ENCODE measurements at regions of chr11 and their contacts with region 1.

Region 1: DNA sequence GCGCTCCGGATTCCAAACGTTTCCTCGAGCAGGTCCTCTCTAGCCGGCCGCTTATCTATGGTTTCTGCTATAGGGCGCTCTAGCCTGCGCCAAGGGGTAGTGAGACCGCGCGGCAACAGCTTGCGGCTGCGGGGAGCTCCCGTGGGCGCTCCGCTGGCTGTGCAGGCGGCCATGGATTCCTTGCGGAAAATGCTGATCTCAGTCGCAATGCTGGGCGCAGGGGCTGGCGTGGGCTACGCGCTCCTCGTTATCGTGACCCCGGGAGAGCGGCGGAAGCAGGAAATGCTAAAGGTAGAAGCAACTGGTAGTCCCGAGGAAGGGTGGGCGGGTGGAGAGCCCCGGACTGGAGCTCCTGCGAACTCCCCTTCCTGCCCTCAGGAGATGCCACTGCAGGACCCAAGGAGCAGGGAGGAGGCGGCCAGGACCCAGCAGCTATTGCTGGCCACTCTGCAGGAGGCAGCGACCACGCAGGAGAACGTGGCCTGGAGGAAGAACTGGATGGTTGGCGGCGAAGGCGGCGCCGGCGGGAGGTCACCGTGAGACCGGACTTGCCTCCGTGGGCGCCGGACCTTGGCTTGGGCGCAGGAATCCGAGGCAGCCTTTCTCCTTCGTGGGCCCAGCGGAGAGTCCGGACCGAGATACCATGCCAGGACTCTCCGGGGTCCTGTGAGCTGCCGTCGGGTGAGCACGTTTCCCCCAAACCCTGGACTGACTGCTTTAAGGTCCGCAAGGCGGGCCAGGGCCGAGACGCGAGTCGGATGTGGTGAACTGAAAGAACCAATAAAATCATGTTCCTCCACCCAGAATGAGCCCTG is at the starts of genes LBHD1 and UQCC3:
- DNase-seq: peak; percentile 88
- H3K4me3 ChIP-seq: peak within 1 kb of the TSS; percentile 68 to 90
- H3K27ac ChIP-seq: peak within 1 kb of the TSS; percentile 80 to 94
- H3K4me1 ChIP-seq: peaks cover 21 to 22% of the 10 kb centered on the region in 2 experiments; a peak in 3 of 4 replicates
- H3K27me3 ChIP-seq: no peaks in the 10 kb centered on the region
- CTCF ChIP-seq: no peak
- EP300 ChIP-seq: no peak
- RAD21 ChIP-seq: no peak
- polyA plus RNA-seq, gene LBHD1: 9.7 and 12.0 TPM in 2 replicates
- polyA plus RNA-seq, gene UQCC3: 22.7 and 24.8 TPM in 2 replicates

Region 2: GRCh38 chr11:62645956-62646824 is 25.6 kb before region 1 on chr11 and contains the start of gene GANAB:
- CTCF ChIA-PET with region 1: no interaction called
- POLR2A ChIA-PET with region 1: interaction called, 10 read pairs
- DNase-seq: peak; percentile 99
- H3K4me3 ChIP-seq: peak within 1 kb of the TSS; percentile 78 to 87
- H3K27ac ChIP-seq: peak within 1 kb of the TSS; percentile 77 to 88
- H3K4me1 ChIP-seq: peaks cover 5 to 8% of the 10 kb centered on the region in 2 experiments; a peak in 2 of 4 replicates
- H3K27me3 ChIP-seq: no peaks in the 10 kb centered on the region
- CTCF ChIP-seq: no peak
- EP300 ChIP-seq: no peak; a peak in 1 of 4 replicates
- RAD21 ChIP-seq: no peak
- polyA plus RNA-seq, gene GANAB: 275 and 332 TPM in 2 replicates

Region 3: DNA sequence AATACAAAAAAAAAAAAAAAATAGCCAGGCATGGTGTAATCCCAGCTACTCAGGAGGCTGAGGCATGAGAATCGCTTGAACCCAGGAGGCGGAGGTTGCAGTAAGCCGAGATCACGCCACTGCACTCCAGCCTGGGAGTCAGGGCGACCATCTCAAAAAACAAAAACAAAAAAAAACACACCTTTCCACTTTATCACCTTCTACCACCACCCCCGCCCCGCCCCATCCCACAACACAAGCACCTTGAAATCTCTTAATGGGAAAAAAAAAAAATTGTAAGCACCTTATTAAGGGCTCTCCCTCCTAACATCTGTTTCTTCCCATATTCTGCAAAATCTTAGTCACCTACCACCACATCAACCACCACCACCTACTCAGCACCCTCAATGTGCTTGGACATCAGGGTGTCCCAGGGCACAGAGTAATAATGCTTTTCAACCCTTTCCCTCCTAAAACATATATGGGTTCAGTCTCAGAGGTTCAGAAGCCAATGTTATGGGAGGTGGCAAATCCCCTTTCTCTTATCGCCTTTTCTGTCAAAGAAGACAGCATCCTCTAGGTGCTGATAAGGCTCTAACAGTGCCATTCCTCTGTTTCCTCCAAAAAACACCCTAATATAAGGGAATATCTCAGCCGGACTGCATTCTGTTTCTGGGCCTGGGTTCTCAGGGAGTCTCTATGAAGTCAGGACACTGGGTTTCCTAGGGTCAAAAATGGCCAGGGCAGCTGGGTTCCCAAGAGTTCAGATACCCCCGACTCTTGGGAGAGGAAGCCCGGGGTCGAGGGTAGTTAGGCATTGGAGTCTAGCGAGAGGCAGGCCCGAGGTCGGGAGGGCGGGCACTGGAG is 19.4 kb before region 1 on chr11:
- CTCF ChIA-PET with region 1: interaction called, 3 read pairs
- POLR2A ChIA-PET with region 1: interaction called, 11 read pairs
- DNase-seq: no peak
- H3K4me3 ChIP-seq: peak overlapping the region; percentile 68 to 88
- H3K27ac ChIP-seq: peak overlapping the region; percentile 67 to 79; a peak in 3 of 4 replicates
- H3K4me1 ChIP-seq: peaks cover 2 to 5% of the 10 kb centered on the region in 2 experiments; a peak in 2 of 4 replicates
- H3K27me3 ChIP-seq: no peaks in the 10 kb centered on the region
- CTCF ChIP-seq: no peak
- EP300 ChIP-seq: no peak
- RAD21 ChIP-seq: no peak

Region 4: GRCh38 chr11:62705880-62706849 is 34.4 kb after region 1 on chr11:
- CTCF ChIA-PET with region 1: interaction called, 3 read pairs
- POLR2A ChIA-PET with region 1: interaction called, 11 read pairs
- DNase-seq: peak; percentile 97
- H3K4me3 ChIP-seq: peak overlapping the region; percentile 67 to 70
- H3K27ac ChIP-seq: peak overlapping the region; percentile 84 to 93
- H3K4me1 ChIP-seq: peaks cover 22 to 45% of the 10 kb centered on the region in 2 experiments; a peak in 3 of 4 replicates
- H3K27me3 ChIP-seq: no peaks in the 10 kb centered on the region
- CTCF ChIP-seq: no peak
- EP300 ChIP-seq: no peak
- RAD21 ChIP-seq: no peak

Region 5: DNA sequence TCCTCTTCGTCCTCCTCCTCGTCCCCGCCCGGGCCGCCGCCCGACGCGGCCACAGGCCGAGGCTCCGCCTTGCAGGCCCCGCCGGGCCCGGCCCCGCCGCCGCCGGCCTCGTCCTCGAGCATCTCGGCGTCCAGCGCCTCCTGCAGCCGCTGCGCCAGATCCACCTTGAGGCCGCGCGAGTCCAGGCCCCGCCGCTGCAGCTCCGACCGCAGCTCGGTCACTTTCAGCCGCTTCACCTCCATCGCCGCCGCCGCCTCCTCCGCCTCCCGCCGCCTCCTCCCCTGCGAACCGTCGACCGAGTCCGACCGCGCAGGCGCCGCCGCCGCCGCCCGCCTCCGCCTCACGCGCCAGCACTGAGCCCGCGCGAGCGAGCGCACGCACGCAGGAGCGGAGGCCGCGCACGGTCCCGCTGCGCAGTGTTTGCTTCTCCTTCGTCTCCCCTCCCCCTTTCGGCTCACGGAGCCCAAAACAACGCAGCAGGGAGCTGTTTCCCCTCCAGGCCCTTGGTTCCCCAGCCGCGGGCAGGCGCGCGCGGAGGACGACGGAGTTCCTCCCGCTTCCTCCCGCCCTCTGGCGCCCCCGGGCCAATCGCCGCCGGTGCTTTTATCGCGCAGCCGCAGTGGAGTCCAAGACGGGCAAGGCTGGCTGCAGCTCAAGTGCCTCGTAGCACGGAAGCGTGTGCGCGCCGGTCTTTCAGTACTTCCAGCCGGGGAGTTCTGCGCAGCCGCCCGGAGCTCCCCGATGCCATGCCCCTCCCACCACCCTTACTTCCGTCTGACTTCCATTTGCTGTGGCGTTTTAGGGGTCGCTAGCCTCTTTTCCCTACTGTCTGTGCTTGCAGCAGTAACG is 55.4 kb after region 1 on chr11 and contains the start of gene HNRNPUL2:
- CTCF ChIA-PET with region 1: interaction called, 3 read pairs
- POLR2A ChIA-PET with region 1: interaction called, 17 read pairs
- DNase-seq: peak; percentile 95
- H3K4me3 ChIP-seq: peak within 1 kb of the TSS; percentile 89 to 92
- H3K27ac ChIP-seq: peak within 1 kb of the TSS; percentile 99
- H3K4me1 ChIP-seq: peaks cover 12 to 21% of the 10 kb centered on the region in 2 experiments; a peak in 3 of 4 replicates
- H3K27me3 ChIP-seq: no peaks in the 10 kb centered on the region
- CTCF ChIP-seq: no peak; the same call in 1 of the 2 replicates
- EP300 ChIP-seq: no peak
- RAD21 ChIP-seq: no peak
- polyA plus RNA-seq, gene HNRNPUL2: 31.0 and 33.5 TPM in 2 replicates

Region 6: DNA sequence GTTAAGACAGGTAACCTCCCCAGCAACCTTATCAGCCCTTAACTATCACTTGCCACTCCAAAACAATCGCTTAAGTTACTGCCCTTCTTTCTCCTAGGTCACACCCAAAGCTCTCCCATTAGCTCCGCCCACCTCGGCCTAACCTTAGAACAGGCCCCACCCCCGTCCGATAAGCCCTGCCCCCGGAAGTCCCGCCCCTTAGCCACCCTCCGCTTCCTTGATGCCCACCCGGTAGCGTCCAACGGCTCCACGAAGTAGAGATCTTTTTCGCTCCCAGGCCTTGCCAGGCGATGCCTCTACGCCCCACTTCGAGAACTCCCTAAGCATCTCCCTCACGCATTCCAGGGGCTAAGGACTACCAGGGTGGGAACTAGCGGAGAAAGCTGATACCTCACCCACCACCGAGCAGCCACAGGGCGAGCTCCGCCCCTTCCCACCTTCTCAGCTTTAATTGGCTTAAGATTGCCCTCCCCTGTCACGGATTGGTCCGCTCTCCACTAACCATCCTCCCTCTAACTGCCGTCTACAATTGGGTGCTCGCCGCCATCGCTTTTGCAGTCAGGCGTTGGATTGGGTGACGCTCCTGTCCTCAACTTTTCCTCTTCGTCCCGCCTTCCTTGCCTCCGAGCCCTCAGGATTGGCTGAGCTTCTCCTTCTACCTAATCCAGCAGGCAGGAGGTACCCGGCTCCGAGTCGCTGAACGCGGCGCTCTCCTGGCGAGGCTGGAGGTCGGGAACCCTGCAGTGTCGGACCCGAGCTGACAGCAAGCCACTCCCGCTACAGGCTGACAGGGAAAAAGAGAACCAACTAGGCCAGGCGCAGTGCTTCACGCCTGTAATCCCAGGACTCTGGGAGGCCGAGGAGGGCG is 82.2 kb after region 1 on chr11 and contains the start of gene ZBTB3:
- CTCF ChIA-PET with region 1: no interaction called
- POLR2A ChIA-PET with region 1: interaction called, 10 read pairs
- DNase-seq: peak; percentile 90
- H3K4me3 ChIP-seq: peak within 1 kb of the TSS; percentile 66 to 69
- H3K27ac ChIP-seq: peak within 1 kb of the TSS; percentile 85 to 95
- H3K4me1 ChIP-seq: peaks cover 6 to 11% of the 10 kb centered on the region in 2 experiments; a peak in 3 of 4 replicates
- H3K27me3 ChIP-seq: no peaks in the 10 kb centered on the region
- CTCF ChIP-seq: no peak
- EP300 ChIP-seq: no peak
- RAD21 ChIP-seq: no peak
- polyA plus RNA-seq, gene ZBTB3: 2.1 and 3.3 TPM in 2 replicates